Sciatic nerve (tissue), 2 donors: ENCODE measurements at regions of chr12 and their contacts with region 1.

Region 1: GRCh38 chr12:68984796-68985573 is 52.0 kb upstream of the CPM start:
- DNase-seq: no peak
- ATAC-seq: no peak

Region 2: GRCh38 chr12:69015841-69016240 is 30.9 kb after region 1 on chr12:
- intact Hi-C with region 1: no loop called
- DNase-seq: no peak
- ATAC-seq: no peak

Region 3: GRCh38 chr12:69497308-69498026 is 512.5 kb after region 1 on chr12:
- intact Hi-C with region 1: loop called (anchors 5 kb)
- DNase-seq: no peak
- ATAC-seq: peak; percentile 76